IMR-90 (cell line): ENCODE measurements at regions of chr21 and their contacts with region 1.

Region 1: DNA sequence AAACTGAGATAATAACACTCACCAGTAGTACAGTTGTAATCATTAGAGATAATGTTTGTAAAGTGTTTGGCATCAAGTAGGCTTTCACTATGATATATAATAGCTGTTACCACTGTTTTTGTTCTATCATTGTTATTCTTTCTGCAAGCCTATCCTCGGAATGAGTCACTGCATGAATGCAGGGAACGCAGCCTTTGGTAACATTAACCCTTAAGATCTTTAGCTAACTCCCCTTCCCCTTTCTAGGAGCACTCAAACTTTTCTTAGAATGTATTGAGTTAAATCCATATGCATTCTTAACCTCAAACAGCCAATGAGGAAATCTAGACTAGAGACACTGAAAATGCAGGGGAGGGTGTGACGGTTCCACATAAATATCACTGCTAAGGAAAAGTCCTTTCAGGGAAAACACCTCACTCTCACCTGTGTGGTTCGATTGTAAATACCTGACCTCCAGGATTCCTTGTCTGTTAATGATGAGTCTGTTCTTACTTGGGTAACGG is 467.3 kb downstream of the SETD4 start:
- DNase-seq: peak; percentile 70
- ATAC-seq: peak; percentile 80
- H3K4me3 ChIP-seq: no peak overlapping the region
- H3K27ac ChIP-seq: peak overlapping the region; percentile 30; the same call in 1 of the 2 replicates
- H3K4me1 ChIP-seq: peaks cover 5% of the 10 kb centered on the region
- H3K27me3 ChIP-seq: no peaks in the 10 kb centered on the region
- CTCF ChIP-seq: no peak
- POLR2A ChIP-seq: no peak
- RAD21 ChIP-seq: no peak

Region 2: GRCh38 chr21:35390013-35390776 is 202.9 kb before region 1 on chr21:
- CTCF ChIA-PET with region 1: no interaction called
- POLR2A ChIA-PET with region 1: no interaction called
- dilution Hi-C with region 1: no loop called
- in situ Hi-C with region 1: no loop called
- intact Hi-C with region 1: no loop called
- DNase-seq: peak; percentile 79
- ATAC-seq: peak; percentile 78
- H3K4me3 ChIP-seq: no peak overlapping the region
- H3K27ac ChIP-seq: no peak overlapping the region
- H3K4me1 ChIP-seq: peaks cover 2% of the 10 kb centered on the region; the same call in 1 of the 2 replicates
- H3K27me3 ChIP-seq: no peaks in the 10 kb centered on the region
- CTCF ChIP-seq: no peak
- POLR2A ChIP-seq: no peak
- RAD21 ChIP-seq: no peak

Region 3: DNA sequence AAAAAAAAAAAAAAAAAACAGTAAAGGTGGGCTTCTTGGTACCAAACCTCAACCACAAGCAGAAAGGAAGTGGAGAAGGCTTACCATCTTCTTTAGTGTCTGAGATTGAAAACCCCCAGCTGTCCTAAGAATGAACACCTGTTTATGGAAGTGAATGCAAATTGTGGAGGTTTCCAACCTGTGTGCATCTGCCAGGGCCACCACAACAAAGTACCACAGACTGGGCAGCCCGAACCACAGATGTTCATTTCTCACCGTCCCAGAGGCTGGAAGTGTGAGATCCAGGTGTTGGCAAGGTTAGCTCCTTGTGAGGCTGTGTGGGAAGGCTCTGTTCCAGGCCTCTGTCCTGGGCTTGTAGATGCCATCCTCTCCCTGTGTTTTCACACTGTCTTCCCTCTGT is 118.6 kb after region 1 on chr21:
- CTCF ChIA-PET with region 1: no interaction called
- POLR2A ChIA-PET with region 1: no interaction called
- dilution Hi-C with region 1: no loop called
- in situ Hi-C with region 1: no loop called
- intact Hi-C with region 1: no loop called
- DNase-seq: no peak
- ATAC-seq: no peak
- H3K4me3 ChIP-seq: no peak overlapping the region
- H3K27ac ChIP-seq: no peak overlapping the region
- H3K4me1 ChIP-seq: no peaks in the 10 kb centered on the region
- H3K27me3 ChIP-seq: peaks cover 29% of the 10 kb centered on the region
- CTCF ChIP-seq: no peak
- POLR2A ChIP-seq: no peak
- RAD21 ChIP-seq: no peak

Region 4: GRCh38 chr21:35738347-35738961 is 145.4 kb after region 1 on chr21:
- CTCF ChIA-PET with region 1: no interaction called
- POLR2A ChIA-PET with region 1: no interaction called
- dilution Hi-C with region 1: no loop called
- in situ Hi-C with region 1: no loop called
- intact Hi-C with region 1: no loop called
- DNase-seq: peak; percentile 4
- ATAC-seq: no peak
- H3K4me3 ChIP-seq: no peak overlapping the region
- H3K27ac ChIP-seq: no peak overlapping the region
- H3K4me1 ChIP-seq: peaks cover 2% of the 10 kb centered on the region; the same call in 1 of the 2 replicates
- H3K27me3 ChIP-seq: no peaks in the 10 kb centered on the region; the same call in 1 of the 2 replicates
- CTCF ChIP-seq: no peak
- POLR2A ChIP-seq: no peak
- RAD21 ChIP-seq: no peak

Region 5: GRCh38 chr21:36082237-36082664 is 489.2 kb after region 1 on chr21:
- CTCF ChIA-PET with region 1: no interaction called
- POLR2A ChIA-PET with region 1: interaction called, 11 read pairs
- dilution Hi-C with region 1: no loop called
- in situ Hi-C with region 1: no loop called
- intact Hi-C with region 1: no loop called
- DNase-seq: peak; percentile 74
- ATAC-seq: peak; percentile 90
- H3K4me3 ChIP-seq: no peak overlapping the region
- H3K27ac ChIP-seq: no peak overlapping the region
- H3K4me1 ChIP-seq: peaks cover 4% of the 10 kb centered on the region
- H3K27me3 ChIP-seq: peaks cover 18% of the 10 kb centered on the region
- CTCF ChIP-seq: no peak
- POLR2A ChIP-seq: no peak
- RAD21 ChIP-seq: no peak